ENCODE measurements at regions of chr18 and their contacts with region 1.

Region 1: DNA sequence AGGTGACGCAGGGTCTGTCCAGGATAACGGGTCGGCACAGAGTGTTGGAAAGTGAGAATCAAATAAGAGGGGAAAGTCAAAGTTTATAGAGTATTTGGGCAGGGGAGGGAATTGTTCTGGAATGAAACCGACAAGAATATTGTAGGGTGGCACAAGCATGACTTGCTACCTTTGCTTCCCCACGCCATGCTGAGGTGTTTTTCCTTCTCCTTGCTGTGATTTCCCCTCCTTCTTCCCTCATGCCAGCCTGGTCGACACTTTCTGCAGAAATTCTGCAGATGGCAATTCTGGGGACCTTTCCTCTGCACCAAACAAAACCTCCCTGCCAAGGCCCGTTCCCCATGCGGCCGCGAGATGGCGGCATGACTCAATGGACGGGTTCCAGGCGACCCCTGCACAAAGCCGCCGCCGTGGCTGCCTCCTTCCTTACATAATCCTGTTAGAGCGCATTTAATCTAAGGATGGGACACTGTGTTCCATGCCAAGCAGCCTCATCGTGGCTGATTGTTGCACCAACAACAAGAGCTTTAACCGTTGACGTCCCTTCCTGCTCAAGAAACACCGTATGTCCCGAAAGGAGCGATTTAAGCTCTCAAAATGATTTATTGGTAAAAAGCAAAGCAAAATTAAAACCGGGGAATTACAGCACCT is at the start of gene MRO:
- DNase-seq: peak; percentile 85
- ATAC-seq: peak; percentile 99
- H3K4me3 Mint-ChIP-seq: no peak within 1 kb of the TSS
- H3K27ac Mint-ChIP-seq: no peak within 1 kb of the TSS
- H3K4me1 Mint-ChIP-seq: no peaks in the 10 kb centered on the region
- H3K27me3 Mint-ChIP-seq: peaks cover 11% of the 10 kb centered on the region
- total RNA-seq, gene MRO: not detected

Region 2: GRCh38 chr18:50797142-50797541 is 22.7 kb before region 1 on chr18:
- CTCF ChIA-PET with region 1: no interaction called
- POLR2A ChIA-PET with region 1: no interaction called
- DNase-seq: no peak
- ATAC-seq: no peak
- H3K4me3 Mint-ChIP-seq: no peak overlapping the region
- H3K27ac Mint-ChIP-seq: no peak overlapping the region
- H3K4me1 Mint-ChIP-seq: no peaks in the 10 kb centered on the region
- H3K27me3 Mint-ChIP-seq: peaks cover 22% of the 10 kb centered on the region

Region 3: GRCh38 chr18:50866765-50867164 is 46.9 kb after region 1 on chr18:
- CTCF ChIA-PET with region 1: interaction called, 19 read pairs
- POLR2A ChIA-PET with region 1: no interaction called
- DNase-seq: no peak
- ATAC-seq: no peak
- H3K4me3 Mint-ChIP-seq: no peak overlapping the region
- H3K27ac Mint-ChIP-seq: no peak overlapping the region
- H3K4me1 Mint-ChIP-seq: no peaks in the 10 kb centered on the region
- H3K27me3 Mint-ChIP-seq: peaks cover 4% of the 10 kb centered on the region

Region 4: DNA sequence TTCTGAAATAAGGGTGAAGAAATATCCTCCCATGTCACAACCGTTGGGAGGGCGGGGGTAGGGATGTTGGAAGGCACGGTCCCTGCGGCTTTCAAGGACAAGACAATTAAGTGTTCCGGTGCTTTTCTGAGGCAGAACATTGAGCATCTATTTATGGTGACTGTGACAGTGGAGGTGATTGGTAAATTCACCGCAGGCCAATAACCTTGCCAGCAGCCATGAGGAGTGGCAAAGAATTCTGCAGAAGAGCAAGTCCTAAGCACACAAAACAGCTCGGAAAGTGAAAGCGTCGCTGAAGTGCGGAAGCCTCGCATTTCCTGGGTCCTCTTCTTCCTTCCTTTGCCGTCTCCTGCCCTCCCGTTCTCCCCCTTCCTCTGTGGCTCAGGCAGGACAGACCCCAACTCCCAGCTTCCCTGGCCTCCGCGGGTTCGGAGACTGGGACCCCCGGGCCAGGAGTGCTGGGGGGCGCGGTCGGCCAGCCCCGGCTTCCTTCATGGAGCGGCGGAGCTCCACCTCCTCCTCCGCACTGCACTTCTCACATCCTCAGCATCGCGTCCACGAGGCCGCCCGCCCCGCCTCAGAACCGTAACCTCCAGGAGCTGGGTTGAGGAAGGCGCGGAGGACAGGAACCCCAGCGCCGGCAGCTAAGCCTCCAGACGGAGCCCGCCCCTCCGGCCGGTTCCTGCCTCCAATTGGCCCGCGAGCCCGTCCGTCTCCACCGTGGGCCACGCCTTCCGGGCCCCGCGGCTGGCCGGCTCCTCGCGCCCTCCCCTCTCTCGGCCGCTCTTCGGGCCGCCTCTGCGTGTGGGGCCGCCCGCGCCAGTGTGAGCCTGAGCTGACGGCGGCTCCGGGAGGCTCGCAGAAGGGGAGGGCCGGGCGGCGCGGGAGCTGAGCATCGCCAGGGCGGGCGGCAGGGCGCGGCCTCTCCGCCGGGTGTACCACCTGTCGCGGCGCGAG is 58.8 kb after region 1 on chr18 and contains the start of gene ME2:
- CTCF ChIA-PET with region 1: interaction called, 9 read pairs
- POLR2A ChIA-PET with region 1: interaction called, 17 read pairs
- DNase-seq: peak; percentile 93
- ATAC-seq: peak; percentile 96
- H3K4me3 Mint-ChIP-seq: peak within 1 kb of the TSS; percentile 88
- H3K27ac Mint-ChIP-seq: peak within 1 kb of the TSS; percentile 98
- H3K4me1 Mint-ChIP-seq: peaks cover 24% of the 10 kb centered on the region
- H3K27me3 Mint-ChIP-seq: peaks cover 6% of the 10 kb centered on the region
- total RNA-seq, gene ME2: 91.2 to 92.5 TPM

Region 5: GRCh38 chr18:51051105-51051712 is 231.4 kb after region 1 on chr18:
- CTCF ChIA-PET with region 1: interaction called, 21 read pairs
- POLR2A ChIA-PET with region 1: no interaction called
- DNase-seq: peak; percentile 41
- ATAC-seq: peak; percentile 90
- H3K4me3 Mint-ChIP-seq: no peak overlapping the region
- H3K27ac Mint-ChIP-seq: no peak overlapping the region
- H3K4me1 Mint-ChIP-seq: peaks cover 23% of the 10 kb centered on the region
- H3K27me3 Mint-ChIP-seq: no peaks in the 10 kb centered on the region

Region 6: DNA sequence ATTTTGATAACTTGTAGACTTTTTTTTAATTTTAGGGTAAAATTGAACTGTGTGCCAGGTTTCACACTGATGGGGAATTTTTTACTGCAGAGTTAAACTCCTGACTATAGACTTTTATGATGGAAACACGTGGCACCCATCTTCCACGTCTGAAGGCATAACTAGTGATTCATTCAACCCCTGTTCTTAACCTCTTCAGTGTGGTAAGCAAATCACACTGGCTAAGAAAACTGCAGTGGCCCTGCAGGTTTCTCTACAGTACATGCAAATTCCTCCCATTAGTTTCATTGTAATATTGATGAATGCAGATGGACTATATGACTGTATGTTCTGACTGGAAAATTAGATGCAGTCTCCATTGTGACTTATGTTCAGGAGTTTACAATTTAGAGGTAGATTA is 257.4 kb after region 1 on chr18:
- CTCF ChIA-PET with region 1: no interaction called
- POLR2A ChIA-PET with region 1: no interaction called
- DNase-seq: no peak
- ATAC-seq: no peak
- H3K4me3 Mint-ChIP-seq: no peak overlapping the region
- H3K27ac Mint-ChIP-seq: no peak overlapping the region
- H3K4me1 Mint-ChIP-seq: peaks cover 27% of the 10 kb centered on the region
- H3K27me3 Mint-ChIP-seq: no peaks in the 10 kb centered on the region